ENCODE measurements at regions of chr14 and their contacts with region 1.

Region 1: DNA sequence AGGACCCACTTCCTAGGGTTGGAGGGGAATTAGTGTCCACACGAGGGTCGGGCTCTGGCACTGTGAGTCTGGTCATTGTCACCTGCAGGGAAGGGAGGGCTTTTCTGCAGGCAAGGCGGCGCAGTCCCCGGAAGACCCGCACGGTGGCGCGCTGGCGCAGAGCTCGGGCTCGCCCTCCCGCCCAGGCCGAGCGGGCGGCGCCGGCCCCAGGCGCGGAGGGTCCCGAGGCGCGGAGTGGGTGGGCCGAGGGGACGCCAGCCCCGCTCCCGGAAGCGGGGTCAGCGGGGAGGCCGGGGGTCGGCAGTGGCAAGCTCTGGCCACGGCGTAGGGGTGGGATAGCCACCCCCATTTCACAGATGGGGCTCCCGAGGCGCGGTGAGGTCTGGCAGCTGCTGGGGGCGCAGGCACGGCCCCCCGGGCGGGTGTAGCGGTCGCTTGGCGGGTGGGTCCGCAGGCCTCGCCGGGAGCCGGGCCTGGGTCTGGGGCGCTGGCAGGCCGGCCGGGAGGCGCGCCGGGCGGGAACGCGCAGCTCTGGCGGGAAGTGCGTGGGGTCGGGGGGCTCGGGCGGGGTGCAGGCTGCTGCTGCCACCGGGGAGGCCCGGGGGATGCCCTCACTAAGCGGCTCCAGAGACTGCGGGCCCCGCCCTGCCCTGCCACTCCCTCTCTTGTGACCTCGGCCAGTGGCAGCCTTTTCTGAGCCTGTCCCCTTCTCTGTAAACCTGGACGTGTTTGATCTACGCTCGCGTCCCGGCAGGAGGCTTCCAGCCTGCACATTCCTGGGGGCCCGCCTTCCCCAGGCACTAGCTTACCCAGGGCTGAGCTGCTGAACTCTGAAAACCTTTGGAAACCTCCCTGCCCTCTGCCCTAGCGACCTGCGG is 46.1 kb downstream of the CYP46A1 start:
- DNase-seq: peak; percentile 85
- H3K4me3 ChIP-seq: peak overlapping the region; percentile 40 to 84 (median 70)
- H3K27ac ChIP-seq: peak overlapping the region; percentile 38 to 70 (median 66)
- H3K4me1 ChIP-seq: peaks cover 0 to 28% (median 26%) of the 10 kb centered on the region in 4 donors
- H3K27me3 ChIP-seq: no peaks in the 10 kb centered on the region
- CTCF ChIP-seq: peak; percentile 42 to 95 (median 81)
- EP300 ChIP-seq: no peak
- POLR2A ChIP-seq: no peak

Region 2: DNA sequence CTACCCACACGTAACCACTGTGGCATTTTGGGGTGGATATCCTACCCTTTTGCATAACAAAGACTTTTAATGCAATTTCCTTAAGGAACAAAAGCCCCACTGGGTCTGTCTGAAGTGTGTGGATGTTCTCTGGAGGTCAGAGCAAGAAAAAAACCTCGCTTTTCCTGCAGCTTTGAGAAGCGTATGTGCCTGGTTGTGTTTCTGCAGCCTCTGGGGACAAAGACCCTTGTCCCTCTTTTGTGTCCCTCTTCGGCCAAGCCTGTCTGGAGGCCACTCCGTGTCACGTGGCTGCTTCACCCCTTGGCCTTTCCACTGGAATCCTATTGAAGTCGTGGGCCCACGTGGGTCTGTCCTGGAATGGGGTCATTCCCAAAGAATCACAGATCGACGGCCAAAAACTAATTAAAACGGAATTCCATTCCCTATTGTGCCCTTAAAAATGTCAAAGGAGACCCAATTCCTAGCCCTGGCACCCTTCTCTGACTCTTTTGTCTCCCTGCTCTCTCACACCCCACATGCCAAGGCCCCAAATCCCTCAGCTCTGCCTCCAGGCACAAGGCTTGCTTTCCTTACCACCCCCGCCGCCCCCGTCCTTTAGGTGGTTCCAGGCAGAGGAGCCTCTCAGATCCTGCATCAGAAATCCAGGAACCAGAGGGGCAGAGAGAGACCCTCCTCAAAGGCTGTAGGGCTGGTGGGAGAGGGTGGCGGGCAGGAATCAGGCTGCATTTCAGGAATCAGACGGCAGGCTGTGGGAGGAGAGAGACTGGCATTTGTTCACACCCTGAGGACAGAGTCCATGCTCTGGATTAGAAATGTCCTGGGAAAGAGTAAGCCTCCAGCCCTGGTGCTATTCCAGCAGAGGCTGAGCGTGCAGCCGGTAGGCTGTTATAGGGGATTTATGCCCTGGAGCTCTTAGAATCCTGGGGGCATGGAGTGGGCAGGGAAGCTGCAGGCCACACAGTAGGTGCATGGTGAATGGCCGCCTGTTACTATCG is 58.7 kb before region 1 on chr14:
- intact Hi-C with region 1: no loop called
- DNase-seq: peak; percentile 53
- H3K4me3 ChIP-seq: no peak overlapping the region
- H3K27ac ChIP-seq: peak overlapping the region in 2 of 4 donors; percentile 12 to 27
- H3K4me1 ChIP-seq: no peaks in the 10 kb centered on the region
- H3K27me3 ChIP-seq: no peaks in the 10 kb centered on the region
- CTCF ChIP-seq: no peak
- EP300 ChIP-seq: no peak
- POLR2A ChIP-seq: no peak

Region 3: DNA sequence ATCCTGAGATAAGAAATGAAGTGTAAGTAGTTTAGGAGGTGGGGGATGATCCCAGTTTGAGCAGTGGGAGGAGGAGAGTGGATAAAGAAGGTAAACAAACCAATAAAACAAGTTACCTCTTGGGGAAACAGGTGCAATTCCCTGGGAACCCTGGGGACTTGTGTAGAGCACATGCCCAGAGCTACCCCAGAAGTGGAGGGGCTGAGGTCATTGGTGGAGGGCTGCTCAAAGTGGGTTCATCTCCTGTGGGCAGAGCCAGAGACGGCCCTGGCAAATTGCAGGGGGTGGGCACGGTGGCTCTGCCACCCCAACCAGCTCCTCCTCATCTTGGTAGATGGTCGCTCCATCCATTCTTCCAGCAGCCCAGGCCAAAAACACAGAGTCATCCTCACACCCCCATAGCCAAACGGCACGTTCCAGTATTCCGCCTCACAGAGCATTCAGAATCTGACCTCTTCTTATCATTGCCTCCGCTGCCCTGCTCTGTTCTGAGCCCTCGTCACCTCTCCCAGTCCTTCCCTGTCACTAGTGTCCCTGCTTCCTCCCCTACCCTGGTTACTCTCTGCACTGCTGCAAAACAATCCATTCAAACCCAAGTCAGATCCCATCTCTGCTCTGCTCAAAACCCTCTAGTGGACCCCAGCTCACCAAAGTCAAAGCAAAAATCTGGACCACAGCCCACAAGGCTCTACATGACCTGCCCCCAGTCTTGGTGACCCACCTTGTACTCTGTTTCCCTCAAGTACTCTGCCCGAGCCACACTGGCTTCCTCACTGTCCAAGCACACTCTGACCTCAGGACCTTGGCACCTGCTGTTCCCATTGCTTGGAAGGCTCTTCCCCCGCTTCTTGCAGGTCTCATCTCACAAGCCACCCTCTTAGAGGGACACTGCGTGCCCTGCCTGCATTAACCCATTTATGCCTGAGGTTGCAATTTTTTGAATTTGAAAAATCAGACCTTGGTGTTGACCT is 40.7 kb before region 1 on chr14:
- intact Hi-C with region 1: no loop called
- DNase-seq: peak; percentile 45
- H3K4me3 ChIP-seq: no peak overlapping the region
- H3K27ac ChIP-seq: no peak overlapping the region
- H3K4me1 ChIP-seq: peaks cover 0 to 3% (median 2%) of the 10 kb centered on the region in 4 donors
- H3K27me3 ChIP-seq: no peaks in the 10 kb centered on the region
- CTCF ChIP-seq: no peak
- EP300 ChIP-seq: no peak
- POLR2A ChIP-seq: no peak

Region 4: DNA sequence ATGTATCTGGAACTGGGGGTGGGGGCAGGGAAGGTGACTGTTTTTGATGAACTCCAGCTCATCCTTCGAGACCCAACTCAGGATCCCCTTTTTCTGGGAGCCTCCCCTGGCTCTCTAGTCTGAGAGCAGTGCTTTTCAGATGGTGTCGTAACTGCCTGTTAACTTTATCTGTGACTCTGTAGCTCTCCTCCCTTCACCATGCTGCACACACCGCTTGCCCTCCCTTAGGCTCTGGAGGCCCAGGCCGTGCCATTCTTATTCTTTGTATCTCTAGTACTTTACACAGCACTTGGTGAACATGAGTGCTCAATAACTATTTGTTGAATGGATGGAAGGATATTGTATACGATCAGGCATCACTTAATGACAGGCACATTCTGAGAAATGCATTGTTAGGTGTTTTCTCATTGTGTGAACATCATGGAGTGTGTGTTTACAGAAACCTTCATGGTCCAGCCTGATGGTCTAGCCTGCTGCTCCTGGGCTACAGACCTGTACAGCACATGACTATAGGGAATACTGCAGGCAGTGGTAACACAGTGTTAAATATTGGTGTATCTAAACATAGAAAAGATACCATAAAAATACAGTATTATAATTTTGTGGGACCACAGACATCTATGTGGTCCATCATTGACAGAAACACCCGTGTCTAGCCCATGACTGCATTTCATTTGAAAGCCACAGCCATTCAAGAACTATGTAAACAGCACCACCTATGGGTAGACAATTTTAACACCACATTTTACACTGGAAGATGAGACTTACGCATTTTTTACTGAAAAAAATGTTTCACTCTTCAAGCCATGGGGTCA is 154.8 kb after region 1 on chr14:
- intact Hi-C with region 1: loop called (anchors 1 kb)
- DNase-seq: peak; percentile 70
- H3K4me3 ChIP-seq: no peak overlapping the region
- H3K27ac ChIP-seq: no peak overlapping the region
- H3K4me1 ChIP-seq: peaks cover 0 to 17% (median 14%) of the 10 kb centered on the region in 4 donors
- H3K27me3 ChIP-seq: no peaks in the 10 kb centered on the region
- CTCF ChIP-seq: peak; percentile 72 to 85 (median 76)
- EP300 ChIP-seq: no peak
- POLR2A ChIP-seq: no peak